Posterior cingulate gyrus (tissue), 11 donors: ENCODE measurements at regions of chr6 and their contacts with region 1.

Region 1: GRCh38 chr6:137271245-137272183 is 52.3 kb upstream of the IFNGR1 start:
- DNase-seq: no peak

Region 2: GRCh38 chr6:137248702-137249101 is 22.8 kb before region 1 on chr6:
- intact Hi-C with region 1: no loop called
- DNase-seq: no peak

Region 3: GRCh38 chr6:137313928-137314855 is 42.7 kb after region 1 on chr6:
- intact Hi-C with region 1: loop called (anchors 5 kb)
- DNase-seq: peak; percentile 35 to 89 (median 68)

Region 4: GRCh38 chr6:137370871-137371633 is 99.5 kb after region 1 on chr6:
- intact Hi-C with region 1: no loop called
- DNase-seq: no peak

Region 5: GRCh38 chr6:137415127-137415833 is 143.8 kb after region 1 on chr6:
- intact Hi-C with region 1: loop called (anchors 2 kb)
- DNase-seq: peak in 8 of 10 donors; percentile 22 to 83 (median 68)